GM12878 (cell line): ENCODE measurements at regions of chr17 and their contacts with region 1.

Region 1: GRCh38 chr17:68771867-68772515 is 170.8 kb upstream of the FAM20A start:
- DNase-seq: no peak
- ATAC-seq: peak; percentile 90
- H3K4me3 ChIP-seq: peak overlapping the region; percentile 61
- H3K27ac ChIP-seq: peak overlapping the region; percentile 46
- H3K4me1 ChIP-seq: peaks cover 15% of the 10 kb centered on the region
- H3K27me3 ChIP-seq: no peaks in the 10 kb centered on the region
- CTCF ChIP-seq: peak; percentile 62 to 80 (median 76)
- EP300 ChIP-seq: no peak
- POLR2A ChIP-seq: no peak
- RAD21 ChIP-seq: peak; percentile 81

Region 2: GRCh38 chr17:68783861-68784260 is 11.9 kb after region 1 on chr17:
- CTCF ChIA-PET with region 1: interaction called, 11 read pairs
- POLR2A ChIA-PET with region 1: no interaction called
- RAD21 ChIA-PET with region 1: interaction called, 3 read pairs
- SMC1A ChIA-PET with region 1: interaction called, 11 read pairs
- in situ Hi-C with region 1: no loop called
- intact Hi-C with region 1: no loop called
- DNase-seq: no peak
- ATAC-seq: no peak
- H3K4me3 ChIP-seq: no peak overlapping the region
- H3K27ac ChIP-seq: no peak overlapping the region
- H3K4me1 ChIP-seq: no peaks in the 10 kb centered on the region
- H3K27me3 ChIP-seq: no peaks in the 10 kb centered on the region
- CTCF ChIP-seq: no peak
- EP300 ChIP-seq: no peak
- POLR2A ChIP-seq: no peak
- RAD21 ChIP-seq: no peak

Region 3: GRCh38 chr17:68794636-68795434 is 22.8 kb after region 1 on chr17:
- CTCF ChIA-PET with region 1: interaction called, 35 read pairs
- POLR2A ChIA-PET with region 1: no interaction called
- RAD21 ChIA-PET with region 1: interaction called, 8 read pairs
- SMC1A ChIA-PET with region 1: interaction called, 18 read pairs
- in situ Hi-C with region 1: no loop called
- intact Hi-C with region 1: no loop called
- DNase-seq: no peak
- ATAC-seq: peak; percentile 72
- H3K4me3 ChIP-seq: peak overlapping the region; percentile 7; the same call in 1 of the 2 replicates
- H3K27ac ChIP-seq: peak overlapping the region; percentile 38
- H3K4me1 ChIP-seq: peaks cover 4% of the 10 kb centered on the region; the same call in 1 of the 2 replicates
- H3K27me3 ChIP-seq: no peaks in the 10 kb centered on the region
- CTCF ChIP-seq: peak; percentile 10 to 41 (median 33); a peak in 3 of 6 replicates
- EP300 ChIP-seq: no peak
- POLR2A ChIP-seq: no peak
- RAD21 ChIP-seq: peak; percentile 48

Region 4: GRCh38 chr17:68909066-68909465 is 137.1 kb after region 1 on chr17:
- CTCF ChIA-PET with region 1: interaction called, 30 read pairs
- POLR2A ChIA-PET with region 1: no interaction called
- RAD21 ChIA-PET with region 1: interaction called, 5 read pairs
- SMC1A ChIA-PET with region 1: interaction called, 5 read pairs
- in situ Hi-C with region 1: no loop called
- intact Hi-C with region 1: loop called (anchors 2 kb)
- DNase-seq: peak; percentile 16
- ATAC-seq: peak; percentile 81
- H3K4me3 ChIP-seq: no peak overlapping the region
- H3K27ac ChIP-seq: no peak overlapping the region
- H3K4me1 ChIP-seq: peaks cover 3% of the 10 kb centered on the region; the same call in 1 of the 2 replicates
- H3K27me3 ChIP-seq: no peaks in the 10 kb centered on the region
- CTCF ChIP-seq: no peak
- EP300 ChIP-seq: no peak
- POLR2A ChIP-seq: no peak
- RAD21 ChIP-seq: no peak

Region 5: GRCh38 chr17:69060822-69061221 is 288.8 kb after region 1 on chr17 and contains the start of gene ABCA9:
- CTCF ChIA-PET with region 1: no interaction called
- POLR2A ChIA-PET with region 1: no interaction called
- RAD21 ChIA-PET with region 1: no interaction called
- SMC1A ChIA-PET with region 1: no interaction called
- in situ Hi-C with region 1: no loop called
- intact Hi-C with region 1: loop called (anchors 10 kb)
- DNase-seq: no peak
- ATAC-seq: no peak
- H3K4me3 ChIP-seq: no peak within 1 kb of the TSS
- H3K27ac ChIP-seq: no peak within 1 kb of the TSS
- H3K4me1 ChIP-seq: no peaks in the 10 kb centered on the region
- H3K27me3 ChIP-seq: no peaks in the 10 kb centered on the region
- CTCF ChIP-seq: no peak
- EP300 ChIP-seq: no peak
- POLR2A ChIP-seq: no peak
- RAD21 ChIP-seq: no peak
- polyA plus RNA-seq, gene ABCA9: under 0.01 to 0.02 TPM

Region 6: DNA sequence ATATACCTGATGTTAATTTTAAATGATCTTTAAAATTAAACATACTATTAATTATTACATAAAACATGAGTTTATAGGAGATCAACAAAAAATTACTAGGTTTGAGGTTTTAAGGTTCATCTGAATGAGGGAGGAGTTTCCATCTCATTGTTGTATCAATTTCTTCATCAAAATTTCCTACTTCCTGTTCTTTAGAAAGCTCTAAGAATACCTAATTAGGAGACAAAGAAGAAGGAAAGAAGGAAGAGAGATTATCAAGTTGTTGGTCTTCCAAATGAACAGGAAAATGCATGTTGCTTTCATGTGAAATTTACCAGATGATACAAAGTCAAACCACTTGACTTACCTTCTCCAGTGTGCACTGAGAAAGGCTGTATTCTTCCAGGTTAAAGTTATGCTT is 306.9 kb after region 1 on chr17:
- CTCF ChIA-PET with region 1: no interaction called
- POLR2A ChIA-PET with region 1: no interaction called
- RAD21 ChIA-PET with region 1: no interaction called
- SMC1A ChIA-PET with region 1: no interaction called
- in situ Hi-C with region 1: no loop called
- intact Hi-C with region 1: no loop called
- DNase-seq: no peak
- ATAC-seq: no peak
- H3K4me3 ChIP-seq: no peak overlapping the region
- H3K27ac ChIP-seq: no peak overlapping the region
- H3K4me1 ChIP-seq: no peaks in the 10 kb centered on the region
- H3K27me3 ChIP-seq: no peaks in the 10 kb centered on the region
- CTCF ChIP-seq: no peak
- EP300 ChIP-seq: no peak
- POLR2A ChIP-seq: no peak
- RAD21 ChIP-seq: no peak

Region 7: DNA sequence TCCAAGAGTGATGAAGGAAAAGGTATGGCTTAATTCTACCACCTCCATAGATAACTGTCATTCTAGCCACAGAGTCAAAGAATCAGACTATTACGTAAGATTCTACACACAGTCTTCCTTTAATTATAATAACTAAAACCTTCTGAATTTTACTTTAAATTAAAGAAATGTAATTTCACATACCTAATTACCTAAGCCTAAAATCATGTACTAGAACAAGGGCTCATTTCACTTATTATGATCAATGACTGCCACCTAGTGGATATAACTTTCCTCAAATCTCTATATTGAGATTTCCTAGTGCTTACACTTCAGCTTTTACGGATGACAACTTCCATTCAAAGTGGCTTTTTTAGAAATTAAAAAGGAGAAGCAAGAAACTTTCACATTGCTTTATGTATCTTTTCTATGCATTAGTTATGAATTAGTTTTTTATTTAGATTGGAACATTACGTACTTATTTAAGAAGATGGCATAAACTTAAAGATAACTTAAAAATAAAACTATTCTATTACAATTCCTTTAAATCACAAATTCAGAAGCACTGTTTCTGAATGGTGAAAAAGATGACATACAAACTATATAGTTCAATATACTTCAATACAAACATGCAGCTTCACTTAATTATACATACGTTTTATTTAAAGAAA is 474.9 kb after region 1 on chr17:
- CTCF ChIA-PET with region 1: interaction called, 90 read pairs
- POLR2A ChIA-PET with region 1: no interaction called
- RAD21 ChIA-PET with region 1: interaction called, 13 read pairs
- SMC1A ChIA-PET with region 1: interaction called, 45 read pairs
- in situ Hi-C with region 1: loop called (anchors 5 kb)
- intact Hi-C with region 1: no loop called
- DNase-seq: peak; percentile 25
- ATAC-seq: peak; percentile 85
- H3K4me3 ChIP-seq: no peak overlapping the region
- H3K27ac ChIP-seq: no peak overlapping the region
- H3K4me1 ChIP-seq: no peaks in the 10 kb centered on the region
- H3K27me3 ChIP-seq: no peaks in the 10 kb centered on the region
- CTCF ChIP-seq: peak; percentile 26 to 64 (median 44); a peak in 4 of 6 replicates
- EP300 ChIP-seq: no peak
- POLR2A ChIP-seq: no peak
- RAD21 ChIP-seq: peak; percentile 68

Region 8: GRCh38 chr17:69388822-69389442 is 616.9 kb after region 1 on chr17:
- CTCF ChIA-PET with region 1: interaction called, 3 read pairs
- POLR2A ChIA-PET with region 1: no interaction called
- RAD21 ChIA-PET with region 1: no interaction called
- SMC1A ChIA-PET with region 1: interaction called, 4 read pairs
- in situ Hi-C with region 1: loop called (anchors 10 kb)
- intact Hi-C with region 1: loop called (anchors 10 kb)
- DNase-seq: no peak
- ATAC-seq: peak; percentile 49
- H3K4me3 ChIP-seq: no peak overlapping the region
- H3K27ac ChIP-seq: no peak overlapping the region
- H3K4me1 ChIP-seq: peaks cover 9% of the 10 kb centered on the region
- H3K27me3 ChIP-seq: no peaks in the 10 kb centered on the region
- CTCF ChIP-seq: no peak
- EP300 ChIP-seq: no peak
- POLR2A ChIP-seq: no peak
- RAD21 ChIP-seq: no peak